Breast epithelium (tissue), 4 donors: ENCODE measurements at regions of chr10 and their contacts with region 1.

Region 1: GRCh38 chr10:114550756-114551635 is 107.1 kb downstream of the ABLIM1 start:
- DNase-seq: peak in 1 of 2 donors; percentile 44
- H3K4me3 ChIP-seq: peak overlapping the region in 2 of 3 donors; percentile 15 to 51
- H3K27ac ChIP-seq: peak overlapping the region; percentile 60 to 65
- H3K4me1 ChIP-seq: no peaks in the 10 kb centered on the region
- H3K27me3 ChIP-seq: no peaks in the 10 kb centered on the region
- CTCF ChIP-seq: peak; percentile 45 to 66 (median 64)
- POLR2A ChIP-seq: no peak

Region 2: DNA sequence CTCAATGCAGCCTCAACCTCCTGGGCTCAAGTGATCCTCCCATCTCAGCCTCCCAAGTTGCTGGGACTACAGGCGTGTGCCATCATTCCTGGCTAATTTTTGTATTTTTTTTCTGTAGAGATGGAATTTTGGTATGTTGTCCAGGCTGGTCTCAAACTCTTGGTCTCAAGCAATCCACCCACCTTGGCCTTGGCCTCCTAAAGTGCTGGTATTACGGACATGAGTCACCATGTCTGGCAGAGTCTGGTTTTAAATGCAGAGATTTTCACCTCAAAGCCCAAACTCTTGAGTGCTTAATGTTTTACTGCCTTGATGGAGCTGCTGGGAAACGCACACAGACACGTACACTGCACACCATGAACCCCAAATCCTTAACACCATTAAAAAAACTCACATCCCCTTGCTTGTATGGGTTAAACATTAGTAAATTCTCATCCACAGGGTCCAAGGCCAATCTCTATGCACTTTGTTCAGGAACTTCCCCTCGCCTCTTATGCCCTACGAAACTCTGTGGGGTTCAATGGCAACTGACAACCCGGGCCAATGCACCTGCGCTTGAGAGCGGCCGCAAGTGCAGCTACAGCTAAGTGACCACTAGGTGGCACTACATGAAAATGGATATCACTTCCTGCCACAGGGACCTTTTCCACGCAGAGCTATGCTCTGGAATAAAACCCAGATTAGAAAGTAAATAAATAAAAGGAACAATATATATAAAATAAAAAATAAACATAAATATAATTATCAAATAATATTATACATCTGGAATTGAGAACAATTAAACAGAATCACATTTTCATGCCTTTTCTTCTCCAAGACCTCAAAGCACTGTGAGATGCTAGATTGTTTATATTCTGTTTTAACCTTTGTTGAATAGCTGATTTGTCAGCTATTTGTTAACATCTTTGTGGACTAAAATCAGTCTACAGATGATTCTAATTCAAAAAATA is 79.8 kb before region 1 on chr10:
- intact Hi-C with region 1: loop called (anchors 10 kb)
- DNase-seq: peak; percentile 46 to 61
- H3K4me3 ChIP-seq: no peak overlapping the region
- H3K27ac ChIP-seq: peak overlapping the region in 1 of 2 donors; percentile 36
- H3K4me1 ChIP-seq: no peaks in the 10 kb centered on the region
- H3K27me3 ChIP-seq: no peaks in the 10 kb centered on the region
- CTCF ChIP-seq: peak; percentile 75 to 90 (median 89)
- POLR2A ChIP-seq: no peak

Region 3: GRCh38 chr10:114538181-114538906 is 12.7 kb before region 1 on chr10:
- intact Hi-C with region 1: no loop called
- DNase-seq: peak in 1 of 2 donors; percentile 51
- H3K4me3 ChIP-seq: no peak overlapping the region
- H3K27ac ChIP-seq: peak overlapping the region; percentile 30 to 40
- H3K4me1 ChIP-seq: peaks cover 0 to 2% of the 10 kb centered on the region in 2 donors
- H3K27me3 ChIP-seq: no peaks in the 10 kb centered on the region
- CTCF ChIP-seq: no peak
- POLR2A ChIP-seq: no peak

Region 4: DNA sequence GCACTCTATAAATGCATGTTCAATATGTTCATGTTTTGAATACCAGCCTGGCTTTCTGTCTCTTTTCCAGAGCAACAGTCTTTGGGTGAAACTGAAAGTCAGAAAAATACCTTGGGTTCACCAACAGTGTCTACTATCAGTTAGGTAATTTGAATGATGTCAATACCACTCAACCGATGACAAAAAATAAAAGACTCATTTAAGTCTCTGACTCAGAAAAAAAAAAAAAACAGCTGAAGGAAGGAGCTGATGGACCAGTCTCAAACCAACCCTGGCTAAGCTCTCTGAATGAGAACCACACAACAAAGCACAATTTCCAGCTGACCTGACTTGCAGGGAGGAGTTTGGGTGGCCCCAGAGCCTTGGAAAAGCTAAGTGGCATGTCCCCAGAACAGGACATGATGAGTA is 64.6 kb after region 1 on chr10:
- intact Hi-C with region 1: no loop called
- DNase-seq: no peak
- H3K4me3 ChIP-seq: no peak overlapping the region
- H3K27ac ChIP-seq: no peak overlapping the region
- H3K4me1 ChIP-seq: no peaks in the 10 kb centered on the region
- H3K27me3 ChIP-seq: no peaks in the 10 kb centered on the region
- CTCF ChIP-seq: no peak
- POLR2A ChIP-seq: no peak

Region 5: GRCh38 chr10:114779803-114780609 is 229.0 kb after region 1 on chr10:
- intact Hi-C with region 1: loop called (anchors 10 kb)
- DNase-seq: no peak
- H3K4me3 ChIP-seq: no peak overlapping the region
- H3K27ac ChIP-seq: peak overlapping the region; percentile 46 to 64
- H3K4me1 ChIP-seq: no peaks in the 10 kb centered on the region
- H3K27me3 ChIP-seq: no peaks in the 10 kb centered on the region
- CTCF ChIP-seq: no peak
- POLR2A ChIP-seq: no peak